Tibial artery (tissue), 4 donors: ENCODE measurements at regions of chr1 and their contacts with region 1.

Region 1: DNA sequence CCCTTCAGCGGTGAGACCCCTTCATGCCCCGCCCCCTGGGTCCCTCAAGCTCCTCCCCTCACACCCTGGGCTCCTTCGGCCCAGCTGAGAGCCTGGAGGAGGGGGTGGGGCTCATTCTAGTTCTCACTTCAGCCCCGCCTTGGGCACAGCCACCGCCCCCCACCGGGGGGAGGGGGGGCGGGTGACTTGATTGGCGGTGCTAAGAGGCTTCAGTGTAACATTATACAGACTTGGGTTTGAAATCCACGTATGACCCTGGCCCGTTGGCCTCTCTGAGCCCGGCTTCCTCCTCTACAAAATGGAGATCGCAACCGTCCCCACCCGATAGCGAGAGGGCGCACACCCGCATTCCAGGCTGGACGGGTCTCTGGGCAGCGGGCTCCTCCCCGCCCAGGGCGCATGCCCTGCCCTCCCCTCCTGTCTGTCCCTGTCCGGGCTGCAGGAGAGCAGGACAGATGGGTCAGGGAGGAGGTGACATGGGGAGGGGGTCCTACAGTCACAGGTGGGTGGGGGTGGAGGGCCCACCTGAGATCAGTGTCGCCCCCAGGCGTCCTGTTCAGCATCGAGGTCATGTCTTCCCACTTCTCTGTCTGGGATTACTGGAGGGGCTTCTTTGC is 5.1 kb downstream of the CLCNKB start:
- DNase-seq: peak in 1 of 2 donors; percentile 44
- H3K4me3 ChIP-seq: peak overlapping the region; percentile 45 to 53
- H3K27ac ChIP-seq: peak overlapping the region; percentile 10 to 44
- H3K4me1 ChIP-seq: peaks cover 0 to 11% (median 9%) of the 10 kb centered on the region in 4 donors
- H3K27me3 ChIP-seq: no peaks in the 10 kb centered on the region
- CTCF ChIP-seq: no peak

Region 2: GRCh38 chr1:15994590-15995351 is 53.9 kb before region 1 on chr1:
- intact Hi-C with region 1: no loop called
- DNase-seq: peak; percentile 58 to 82
- H3K4me3 ChIP-seq: no peak overlapping the region
- H3K27ac ChIP-seq: no peak overlapping the region
- H3K4me1 ChIP-seq: no peaks in the 10 kb centered on the region
- H3K27me3 ChIP-seq: no peaks in the 10 kb centered on the region
- CTCF ChIP-seq: peak; percentile 88 to 93

Region 3: GRCh38 chr1:16023769-16024168 is 24.9 kb before region 1 on chr1:
- intact Hi-C with region 1: loop called (anchors 1 kb)
- DNase-seq: no peak
- H3K4me3 ChIP-seq: no peak overlapping the region
- H3K27ac ChIP-seq: no peak overlapping the region
- H3K4me1 ChIP-seq: peaks cover 9 to 31% (median 28%) of the 10 kb centered on the region in 4 donors
- H3K27me3 ChIP-seq: no peaks in the 10 kb centered on the region
- CTCF ChIP-seq: no peak